ENCODE measurements at regions of chr19 and their contacts with region 1.

Region 1: GRCh38 chr19:46766569-46767317 is 20.5 kb upstream of the STRN4 start:
- DNase-seq: peak; percentile 75
- ATAC-seq: peak; percentile 80
- H3K4me3 Mint-ChIP-seq: no peak overlapping the region
- H3K27ac Mint-ChIP-seq: peak overlapping the region; percentile 7
- H3K4me1 Mint-ChIP-seq: peaks cover 5% of the 10 kb centered on the region
- H3K27me3 Mint-ChIP-seq: no peaks in the 10 kb centered on the region

Region 2: DNA sequence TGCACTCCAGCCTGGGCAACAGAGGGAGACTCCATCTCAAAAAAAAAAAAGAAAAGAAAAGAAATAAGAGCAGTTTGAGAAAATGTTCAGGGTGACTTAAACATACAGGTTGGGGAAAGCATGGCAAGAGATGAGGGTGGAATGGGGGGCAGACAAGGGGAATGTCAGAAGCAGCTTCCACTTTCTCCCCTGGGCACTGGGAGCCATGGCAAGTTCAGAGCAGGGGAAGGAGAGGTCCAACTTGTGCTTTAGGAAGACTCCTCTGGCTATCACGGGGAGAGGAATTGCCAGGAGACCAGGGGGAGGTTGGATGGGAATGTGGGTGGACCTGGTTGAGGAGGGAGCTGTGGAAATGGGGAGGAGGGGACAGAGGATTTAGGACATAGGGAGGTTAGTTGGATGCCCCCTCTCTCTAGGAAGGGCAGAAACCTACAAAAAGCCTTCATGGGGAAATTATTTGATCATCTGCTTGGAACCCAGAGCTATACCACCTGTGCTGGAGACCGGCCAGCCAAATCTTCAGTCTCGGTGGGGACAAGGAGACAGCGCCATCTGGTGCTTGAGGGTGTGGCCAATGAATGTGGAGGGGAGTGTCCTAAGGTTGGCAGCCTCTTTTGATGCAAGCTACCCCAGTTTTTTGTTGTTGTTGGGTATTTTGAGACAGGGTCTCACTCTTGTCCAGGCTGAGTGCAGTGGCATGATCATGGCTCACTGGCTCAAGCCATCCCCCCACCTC is 13.2 kb before region 1 on chr19:
- CTCF ChIA-PET with region 1: interaction called, 39 read pairs
- POLR2A ChIA-PET with region 1: interaction called, 4 read pairs
- DNase-seq: peak; percentile 85
- ATAC-seq: peak; percentile 84
- H3K4me3 Mint-ChIP-seq: no peak overlapping the region
- H3K27ac Mint-ChIP-seq: no peak overlapping the region
- H3K4me1 Mint-ChIP-seq: peaks cover 25% of the 10 kb centered on the region
- H3K27me3 Mint-ChIP-seq: no peaks in the 10 kb centered on the region

Region 3: GRCh38 chr19:46788262-46788967 is 21.7 kb after region 1 on chr19 and contains the start of gene SLC1A5:
- CTCF ChIA-PET with region 1: interaction called, 65 read pairs
- POLR2A ChIA-PET with region 1: interaction called, 5 read pairs
- DNase-seq: peak; percentile 99
- ATAC-seq: peak; percentile 71
- H3K4me3 Mint-ChIP-seq: peak within 1 kb of the TSS; percentile 98
- H3K27ac Mint-ChIP-seq: peak within 1 kb of the TSS; percentile 96
- H3K4me1 Mint-ChIP-seq: peaks cover 63% of the 10 kb centered on the region
- H3K27me3 Mint-ChIP-seq: no peaks in the 10 kb centered on the region
- total RNA-seq, gene SLC1A5: 176 to 178 TPM

Region 4: GRCh38 chr19:46797881-46798280 is 31.1 kb after region 1 on chr19:
- CTCF ChIA-PET with region 1: interaction called, 12 read pairs
- POLR2A ChIA-PET with region 1: no interaction called
- DNase-seq: no peak
- ATAC-seq: no peak
- H3K4me3 Mint-ChIP-seq: no peak overlapping the region
- H3K27ac Mint-ChIP-seq: no peak overlapping the region
- H3K4me1 Mint-ChIP-seq: peaks cover 9% of the 10 kb centered on the region
- H3K27me3 Mint-ChIP-seq: peaks cover 10% of the 10 kb centered on the region

Region 5: DNA sequence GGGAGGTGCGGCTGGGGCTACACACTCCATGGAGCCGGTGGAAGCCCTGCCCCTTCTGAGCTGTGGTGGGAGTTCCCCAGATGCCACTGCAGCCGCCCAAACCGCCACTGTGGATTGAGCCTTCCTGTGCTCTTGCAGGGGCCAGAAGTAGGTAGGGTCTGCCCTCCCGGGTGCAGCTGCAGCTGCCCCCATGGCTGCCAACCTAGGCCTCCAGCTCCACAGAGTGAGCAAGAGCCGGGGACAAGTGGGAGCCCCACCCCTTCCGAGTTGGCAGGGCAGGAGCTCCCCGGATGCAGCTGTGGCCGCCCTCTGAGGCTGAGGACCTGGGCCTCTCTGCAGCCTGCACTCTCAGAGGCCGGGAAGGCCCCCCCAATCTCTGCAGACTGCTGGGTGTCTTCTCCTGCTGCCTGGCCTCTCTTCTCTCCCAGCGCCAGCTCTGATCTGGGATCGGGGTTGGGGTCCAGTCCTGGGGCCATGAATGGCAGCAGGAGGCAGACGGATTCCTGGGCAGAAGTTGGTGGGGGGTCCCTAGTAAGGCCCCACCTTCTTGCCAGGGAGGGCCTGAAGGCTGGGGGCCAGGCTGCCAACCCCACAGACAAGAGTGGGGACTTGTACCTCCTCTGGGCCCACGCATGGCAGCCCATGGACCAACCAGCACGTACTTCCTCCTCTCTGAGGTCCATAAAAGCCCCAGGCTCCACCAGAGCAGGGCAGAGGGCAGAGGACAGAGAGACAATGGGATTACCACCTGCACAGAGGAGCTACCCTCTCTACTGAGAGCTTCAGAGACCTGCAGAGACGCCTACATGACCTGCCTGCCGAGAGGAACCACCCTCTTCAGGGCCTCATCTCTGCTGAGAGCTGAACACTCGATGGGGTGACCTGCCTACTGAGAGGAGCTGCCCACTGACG is 55.0 kb after region 1 on chr19:
- CTCF ChIA-PET with region 1: interaction called, 10 read pairs
- POLR2A ChIA-PET with region 1: no interaction called
- DNase-seq: peak; percentile 83
- ATAC-seq: peak; percentile 91
- H3K4me3 Mint-ChIP-seq: peak overlapping the region; percentile 45
- H3K27ac Mint-ChIP-seq: peak overlapping the region; percentile 84
- H3K4me1 Mint-ChIP-seq: peaks cover 51% of the 10 kb centered on the region
- H3K27me3 Mint-ChIP-seq: no peaks in the 10 kb centered on the region

Region 6: GRCh38 chr19:46898731-46899130 is 132.0 kb after region 1 on chr19:
- CTCF ChIA-PET with region 1: no interaction called
- POLR2A ChIA-PET with region 1: no interaction called
- DNase-seq: no peak
- ATAC-seq: no peak
- H3K4me3 Mint-ChIP-seq: no peak overlapping the region
- H3K27ac Mint-ChIP-seq: no peak overlapping the region
- H3K4me1 Mint-ChIP-seq: peaks cover 17% of the 10 kb centered on the region
- H3K27me3 Mint-ChIP-seq: no peaks in the 10 kb centered on the region

Region 7: DNA sequence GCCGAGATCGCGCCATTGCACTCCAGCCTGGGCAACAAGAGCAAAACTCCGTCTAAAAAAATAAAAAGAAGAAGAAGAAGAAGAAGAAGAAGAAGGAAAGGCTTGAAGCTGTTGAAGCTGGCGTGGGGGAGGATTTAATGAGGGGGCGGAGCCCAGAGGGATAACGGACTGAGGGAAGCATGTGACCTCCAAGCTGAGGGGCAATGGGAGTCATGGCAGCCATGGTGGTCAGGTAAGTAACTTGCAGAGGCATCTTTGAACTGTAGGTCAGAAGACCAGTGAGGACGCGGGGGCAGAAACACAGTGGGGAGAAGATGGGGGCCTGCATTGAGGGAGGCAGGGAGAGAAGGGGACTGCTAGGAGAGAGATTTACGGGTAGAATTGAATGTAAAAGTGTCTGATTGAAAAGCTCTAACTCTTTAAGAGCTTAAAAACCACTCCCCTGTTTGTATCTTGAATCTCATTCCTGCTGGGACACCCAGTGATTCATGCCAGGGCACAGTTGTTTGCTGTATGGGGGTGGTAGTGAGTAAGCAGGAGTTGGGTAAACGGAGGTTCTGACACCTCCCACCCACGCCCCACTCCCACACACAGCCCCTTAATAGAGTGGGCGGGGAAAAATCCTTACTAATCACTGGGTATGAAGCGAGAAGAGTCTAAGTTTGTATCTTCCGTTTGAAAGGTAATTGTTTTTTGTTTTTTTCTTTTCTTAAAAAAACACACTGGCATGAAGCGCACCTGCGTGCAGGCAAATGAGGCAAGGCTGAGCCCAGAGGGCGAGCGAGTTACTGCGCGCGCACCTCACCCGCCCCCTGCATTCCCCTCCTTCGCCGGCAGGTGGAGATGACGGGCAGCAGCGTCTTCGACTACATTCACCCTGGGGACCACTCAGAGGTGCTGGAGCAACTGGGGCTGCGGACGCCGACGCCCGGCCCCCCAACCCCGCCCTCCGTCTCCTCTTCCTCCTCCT is 268.7 kb after region 1 on chr19:
- CTCF ChIA-PET with region 1: no interaction called
- POLR2A ChIA-PET with region 1: no interaction called
- DNase-seq: peak; percentile 96
- ATAC-seq: peak; percentile 95
- H3K4me3 Mint-ChIP-seq: peak overlapping the region; percentile 87
- H3K27ac Mint-ChIP-seq: peak overlapping the region; percentile 80
- H3K4me1 Mint-ChIP-seq: peaks cover 21% of the 10 kb centered on the region
- H3K27me3 Mint-ChIP-seq: peaks cover 16% of the 10 kb centered on the region

Measured in activated CD8-positive, alpha-beta T cell treated with anti-CD3 and anti-CD28 coated beads, Interleukin-2, amount 10 ng/mL, durations not matched to agents 7 days and 5 days (primary cell).